ENCODE measurements at regions of chrX and their contacts with region 1.

Region 1: DNA sequence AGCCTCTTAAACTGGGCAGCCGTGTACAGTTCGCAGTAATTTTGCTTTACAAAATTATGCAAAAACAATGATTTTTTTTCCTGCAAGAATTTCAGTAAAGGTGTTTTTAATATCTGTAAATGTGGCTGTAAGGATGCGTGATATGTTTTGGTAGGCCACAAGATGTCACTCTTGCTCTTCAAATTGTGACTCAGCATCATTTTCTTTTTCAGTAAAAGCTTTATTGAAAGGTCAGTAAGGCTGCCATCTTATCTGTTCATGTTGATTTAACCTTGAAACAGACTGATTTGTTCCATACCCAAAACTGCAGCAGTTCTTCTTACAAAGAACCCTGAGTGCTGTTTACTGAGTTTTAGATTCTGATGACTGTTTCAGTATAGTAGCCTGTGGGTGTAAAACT is 39.9 kb downstream of the TXLNG start:
- DNase-seq: no peak
- H3K4me3 ChIP-seq: no peak overlapping the region
- H3K27ac ChIP-seq: peak overlapping the region in 34 of 59 donors; percentile 3 to 77 (median 44)
- H3K27me3 ChIP-seq: peaks cover 0 to 8% (median 0%) of the 10 kb centered on the region in 45 donors
- CTCF ChIP-seq: peak; percentile 24 to 85 (median 66)

Region 2: GRCh38 chrX:16953606-16954220 is 127.5 kb after region 1 on chrX:
- intact Hi-C with region 1: no loop called
- DNase-seq: no peak
- H3K4me3 ChIP-seq: no peak overlapping the region
- H3K27ac ChIP-seq: peak overlapping the region in 1 of 59 donors; percentile 16
- H3K27me3 ChIP-seq: peaks cover 0 to 64% (median 21%) of the 10 kb centered on the region in 45 donors
- CTCF ChIP-seq: no peak

Region 3: GRCh38 chrX:17046478-17047097 is 220.4 kb after region 1 on chrX:
- intact Hi-C with region 1: loop called in 1 of 2 experiments (anchors 10 kb)
- DNase-seq: peak in 7 of 10 donors; percentile 25 to 81 (median 54)
- H3K4me3 ChIP-seq: no peak overlapping the region
- H3K27ac ChIP-seq: peak overlapping the region in 40 of 59 donors; percentile 4 to 75 (median 47)
- H3K27me3 ChIP-seq: peaks cover 0 to 45% (median 3%) of the 10 kb centered on the region in 45 donors
- CTCF ChIP-seq: peak; percentile 36 to 84 (median 71)

Region 4: GRCh38 chrX:17689971-17690409 is 863.8 kb after region 1 on chrX:
- intact Hi-C with region 1: loop called in 1 of 2 experiments (anchors 10 kb)
- DNase-seq: peak in 5 of 10 donors; percentile 21 to 63 (median 43)
- H3K4me3 ChIP-seq: no peak overlapping the region
- H3K27ac ChIP-seq: no peak overlapping the region
- H3K27me3 ChIP-seq: peaks cover 0 to 89% (median 18%) of the 10 kb centered on the region in 45 donors
- CTCF ChIP-seq: peak; percentile 28 to 88 (median 78)